ENCODE measurements at regions of chr19 and their contacts with region 1.

Region 1: GRCh38 chr19:50724522-50725217 is 1.5 kb downstream of the CLEC11A start:
- DNase-seq: peak; percentile 100
- H3K4me3 ChIP-seq: peak overlapping the region; percentile 51 to 70 (median 64)
- H3K27ac ChIP-seq: peak overlapping the region; percentile 63 to 83 (median 70)
- H3K4me1 ChIP-seq: peaks cover 0 to 23% (median 19%) of the 10 kb centered on the region in 4 donors
- H3K27me3 ChIP-seq: peaks cover 4 to 67% (median 45%) of the 10 kb centered on the region in 3 donors
- CTCF ChIP-seq: peak; percentile 56 to 71 (median 58)
- EP300 ChIP-seq: no peak
- POLR2A ChIP-seq: peak in 1 of 2 donors; percentile 15

Region 2: DNA sequence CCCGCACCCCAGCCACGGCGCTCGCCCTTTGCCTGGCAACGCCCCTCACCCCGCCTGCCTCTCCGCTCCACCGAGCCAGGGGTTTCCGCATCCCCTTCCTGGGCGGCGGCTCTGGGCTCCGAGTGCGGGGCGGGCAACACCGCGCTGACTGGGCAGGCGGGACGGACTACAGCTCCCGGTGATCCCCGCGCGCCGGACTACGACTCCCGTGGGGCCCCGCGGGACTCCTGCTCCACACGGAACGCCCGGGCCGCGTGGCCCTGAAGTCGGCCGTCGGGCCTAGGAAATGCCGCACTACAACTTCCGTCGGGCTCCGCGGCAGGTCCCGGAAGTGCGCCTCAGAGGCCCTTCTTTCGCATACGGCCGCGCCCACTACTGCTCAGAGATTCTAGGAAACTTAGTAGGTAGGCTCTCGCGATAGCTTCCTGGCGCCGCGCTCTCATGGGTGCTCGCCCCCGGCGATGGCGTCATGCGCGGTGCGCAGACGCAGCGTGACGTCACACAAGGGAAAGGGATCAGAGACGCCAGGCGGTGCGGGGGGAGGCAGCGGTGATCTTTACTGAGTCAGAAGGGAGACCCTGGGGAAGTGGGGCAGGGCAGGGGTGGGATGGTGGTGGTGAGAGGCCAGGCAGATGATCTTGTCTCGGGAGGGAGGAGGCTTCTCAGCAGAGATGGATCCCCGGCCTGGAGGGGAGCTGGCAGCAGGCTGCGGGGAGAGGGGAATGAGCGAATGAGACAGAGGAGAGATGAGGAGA is 213.4 kb before region 1 on chr19 and contains the start of gene JOSD2:
- intact Hi-C with region 1: loop called (anchors 10 kb)
- DNase-seq: peak; percentile 99
- H3K4me3 ChIP-seq: peak within 1 kb of the TSS; percentile 56 to 94 (median 80)
- H3K27ac ChIP-seq: peak within 1 kb of the TSS; percentile 76 to 80 (median 78)
- H3K4me1 ChIP-seq: peaks cover 0 to 15% (median 9%) of the 10 kb centered on the region in 4 donors
- H3K27me3 ChIP-seq: peaks cover 0 to 10% (median 0%) of the 10 kb centered on the region in 3 donors
- CTCF ChIP-seq: no peak
- EP300 ChIP-seq: peak in 1 of 4 donors; percentile 50
- POLR2A ChIP-seq: peak in 1 of 2 donors; percentile 62
- total RNA-seq, gene JOSD2: 23.5 to 47.9 (median 33.7) TPM

Region 3: DNA sequence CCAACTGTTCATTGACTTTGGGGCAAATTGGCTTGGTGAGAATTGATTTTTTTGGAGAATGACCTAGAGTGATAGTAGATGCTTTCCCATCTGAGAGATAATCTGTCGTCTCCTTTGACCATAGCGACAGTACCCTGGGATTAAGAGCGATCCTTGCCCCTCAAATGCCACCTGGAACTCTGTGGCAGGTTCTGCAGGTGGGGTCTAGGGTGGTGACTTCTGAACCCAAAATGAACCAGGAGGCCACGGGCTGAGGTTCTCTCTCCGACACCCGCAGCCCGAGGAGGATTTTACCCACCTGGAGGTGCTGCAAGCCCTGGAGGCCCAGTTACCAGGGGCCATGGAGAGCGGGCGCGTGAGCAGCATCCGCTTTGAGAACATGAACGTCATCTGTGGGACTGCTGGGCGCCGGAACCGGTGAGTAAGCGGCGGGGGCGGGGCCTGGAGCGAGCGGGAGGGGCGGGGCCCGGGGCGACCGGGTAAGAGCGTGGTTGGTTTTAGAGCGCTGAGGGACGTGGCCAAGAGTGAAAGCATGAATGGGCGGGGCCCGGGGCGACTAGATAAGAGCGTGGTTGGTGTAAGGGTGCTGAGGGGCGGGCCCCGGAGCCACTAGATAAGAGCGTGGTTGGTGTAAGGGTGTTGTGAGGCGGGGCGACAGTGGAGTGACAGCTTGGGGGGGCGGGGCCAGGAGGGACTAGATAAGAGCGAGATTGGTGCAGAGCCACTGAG is 66.8 kb before region 1 on chr19:
- intact Hi-C with region 1: no loop called
- DNase-seq: peak; percentile 90
- H3K4me3 ChIP-seq: peak overlapping the region in 2 of 4 donors; percentile 31
- H3K27ac ChIP-seq: no peak overlapping the region
- H3K4me1 ChIP-seq: peaks cover 0 to 19% (median 16%) of the 10 kb centered on the region in 4 donors
- H3K27me3 ChIP-seq: peaks cover 18 to 96% (median 73%) of the 10 kb centered on the region in 3 donors
- CTCF ChIP-seq: no peak
- EP300 ChIP-seq: no peak
- POLR2A ChIP-seq: no peak

Region 4: GRCh38 chr19:50777754-50778303 is 53.2 kb after region 1 on chr19:
- intact Hi-C with region 1: loop called (anchors 1 kb)
- DNase-seq: no peak
- H3K4me3 ChIP-seq: no peak overlapping the region
- H3K27ac ChIP-seq: no peak overlapping the region
- H3K4me1 ChIP-seq: no peaks in the 10 kb centered on the region
- H3K27me3 ChIP-seq: peaks cover 20 to 95% (median 70%) of the 10 kb centered on the region in 3 donors
- CTCF ChIP-seq: no peak
- EP300 ChIP-seq: no peak
- POLR2A ChIP-seq: no peak

Region 5: DNA sequence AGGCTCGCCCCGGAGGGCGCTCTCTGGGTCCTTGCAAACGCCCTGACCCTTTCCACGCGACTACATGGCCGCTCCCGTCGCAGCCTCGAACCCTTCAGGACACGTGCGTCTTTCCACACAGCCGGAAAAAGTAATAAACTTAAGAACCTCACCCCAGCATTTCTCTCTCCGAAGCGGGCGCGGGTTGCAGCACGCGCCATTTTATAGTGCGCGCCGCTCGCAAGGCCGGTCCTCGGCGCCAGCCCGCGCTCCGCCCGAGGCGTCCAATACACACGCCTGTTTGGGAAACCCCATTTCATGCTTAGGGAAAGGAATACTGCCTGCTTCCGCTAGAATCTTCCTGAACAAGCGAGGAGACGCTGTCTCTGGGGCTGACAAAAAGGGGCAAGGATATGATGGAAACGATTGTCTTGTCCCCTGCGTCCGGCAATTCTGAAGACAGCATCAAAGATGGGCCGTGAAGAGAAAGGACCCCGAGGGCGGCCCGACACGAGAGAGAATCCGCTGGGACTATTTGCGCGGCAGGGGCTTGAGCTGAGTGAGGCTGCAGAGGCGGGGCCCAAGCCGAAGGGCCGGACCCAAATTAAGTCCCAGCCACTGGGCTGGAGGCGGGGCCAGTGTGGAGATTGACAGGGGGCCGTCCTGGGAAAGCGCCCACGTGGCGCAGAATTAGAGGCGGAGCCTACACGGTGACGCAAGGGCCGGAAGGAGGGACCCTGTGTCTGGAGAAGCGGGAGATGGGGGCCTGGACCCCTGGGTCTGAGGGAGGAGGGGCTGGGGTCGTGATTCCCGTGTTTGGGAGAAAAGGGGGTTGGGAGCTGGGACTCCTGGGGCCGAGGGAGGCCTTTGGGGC is 80.0 kb after region 1 on chr19:
- intact Hi-C with region 1: loop called (anchors 2 kb)
- DNase-seq: peak; percentile 99
- H3K4me3 ChIP-seq: peak overlapping the region; percentile 69 to 94 (median 74)
- H3K27ac ChIP-seq: peak overlapping the region; percentile 83 to 95 (median 92)
- H3K4me1 ChIP-seq: peaks cover 1 to 24% (median 18%) of the 10 kb centered on the region in 4 donors
- H3K27me3 ChIP-seq: no peaks in the 10 kb centered on the region
- CTCF ChIP-seq: no peak
- EP300 ChIP-seq: peak in 1 of 4 donors; percentile 8
- POLR2A ChIP-seq: peak; percentile 56 to 62